Aorta (tissue), 5 donors: ENCODE measurements at regions of chr22 and their contacts with region 1.

Region 1: GRCh38 chr22:16774911-16775500 is 50.2 kb downstream of the XKR3 start:
- DNase-seq: no peak
- ATAC-seq: no peak
- H3K4me3 ChIP-seq: no peak overlapping the region
- H3K27ac ChIP-seq: no peak overlapping the region
- H3K4me1 ChIP-seq: no peaks in the 10 kb centered on the region
- H3K27me3 ChIP-seq: no peaks in the 10 kb centered on the region

Region 2: DNA sequence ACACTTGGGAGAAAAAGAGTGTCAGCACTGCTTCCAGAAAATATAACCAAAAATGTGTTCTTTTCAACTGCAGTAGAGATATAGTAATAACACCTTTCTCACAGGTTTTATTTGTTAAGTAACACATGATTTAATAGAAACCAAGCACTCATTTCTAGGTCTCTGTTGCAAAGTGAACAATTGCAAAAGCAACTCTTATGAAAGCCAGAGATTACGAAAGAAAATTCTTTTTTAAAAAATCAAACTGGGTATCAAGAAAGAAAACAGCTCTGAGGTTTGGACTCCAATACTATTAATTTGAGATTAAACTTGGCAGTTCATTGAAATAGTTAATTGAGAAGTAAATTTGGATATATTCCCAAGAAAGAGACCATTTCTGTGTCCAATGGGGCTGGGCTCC is 60.0 kb after region 1 on chr22:
- intact Hi-C with region 1: loop called in 1 of 2 experiments (anchors 10 kb)
- DNase-seq: no peak
- ATAC-seq: no peak
- H3K4me3 ChIP-seq: no peak overlapping the region
- H3K27ac ChIP-seq: no peak overlapping the region
- H3K4me1 ChIP-seq: no peaks in the 10 kb centered on the region
- H3K27me3 ChIP-seq: no peaks in the 10 kb centered on the region

Region 3: GRCh38 chr22:16961477-16962186 is 186.6 kb after region 1 on chr22:
- intact Hi-C with region 1: no loop called
- DNase-seq: no peak
- ATAC-seq: no peak
- H3K4me3 ChIP-seq: no peak overlapping the region
- H3K27ac ChIP-seq: no peak overlapping the region
- H3K4me1 ChIP-seq: no peaks in the 10 kb centered on the region
- H3K27me3 ChIP-seq: no peaks in the 10 kb centered on the region

Region 4: GRCh38 chr22:17057959-17058814 is 283.2 kb after region 1 on chr22:
- intact Hi-C with region 1: no loop called
- DNase-seq: no peak
- ATAC-seq: peak; percentile 82
- H3K4me3 ChIP-seq: no peak overlapping the region
- H3K27ac ChIP-seq: no peak overlapping the region
- H3K4me1 ChIP-seq: no peaks in the 10 kb centered on the region
- H3K27me3 ChIP-seq: no peaks in the 10 kb centered on the region